GM12878 (cell line): ENCODE measurements at regions of chr20 and their contacts with region 1.

Region 1: GRCh38 chr20:6142348-6142993 is 19.6 kb upstream of the FERMT1 start:
- DNase-seq: peak; percentile 9
- ATAC-seq: peak; percentile 91
- H3K4me3 ChIP-seq: no peak overlapping the region
- H3K27ac ChIP-seq: no peak overlapping the region
- H3K4me1 ChIP-seq: no peaks in the 10 kb centered on the region
- H3K27me3 ChIP-seq: no peaks in the 10 kb centered on the region
- CTCF ChIP-seq: peak; percentile 71 to 84 (median 76); a peak in 5 of 6 replicates
- EP300 ChIP-seq: no peak
- POLR2A ChIP-seq: no peak
- RAD21 ChIP-seq: peak; percentile 68

Region 2: GRCh38 chr20:5844063-5844681 is 298.3 kb before region 1 on chr20:
- CTCF ChIA-PET with region 1: no interaction called
- POLR2A ChIA-PET with region 1: no interaction called
- RAD21 ChIA-PET with region 1: no interaction called
- SMC1A ChIA-PET with region 1: no interaction called
- in situ Hi-C with region 1: no loop called
- intact Hi-C with region 1: no loop called
- DNase-seq: peak; percentile 78
- ATAC-seq: peak; percentile 87
- H3K4me3 ChIP-seq: peak overlapping the region; percentile 24; the same call in 1 of the 2 replicates
- H3K27ac ChIP-seq: no peak overlapping the region
- H3K4me1 ChIP-seq: peaks cover 31% of the 10 kb centered on the region
- H3K27me3 ChIP-seq: no peaks in the 10 kb centered on the region
- CTCF ChIP-seq: no peak
- EP300 ChIP-seq: peak; percentile 56 to 62; a peak in 2 of 4 replicates
- POLR2A ChIP-seq: no peak
- RAD21 ChIP-seq: no peak

Region 3: GRCh38 chr20:6130045-6130444 is 12.4 kb before region 1 on chr20:
- CTCF ChIA-PET with region 1: interaction called, 10 read pairs
- POLR2A ChIA-PET with region 1: no interaction called
- RAD21 ChIA-PET with region 1: no interaction called
- SMC1A ChIA-PET with region 1: interaction called, 3 read pairs
- in situ Hi-C with region 1: no loop called
- intact Hi-C with region 1: no loop called
- DNase-seq: no peak
- ATAC-seq: no peak
- H3K4me3 ChIP-seq: no peak overlapping the region
- H3K27ac ChIP-seq: no peak overlapping the region
- H3K4me1 ChIP-seq: no peaks in the 10 kb centered on the region
- H3K27me3 ChIP-seq: peaks cover 0 to 2% of the 10 kb centered on the region in 2 experiments; a peak in 1 of 4 replicates
- CTCF ChIP-seq: no peak
- EP300 ChIP-seq: no peak
- POLR2A ChIP-seq: no peak
- RAD21 ChIP-seq: no peak

Region 4: GRCh38 chr20:7375905-7376304 is 1233.4 kb after region 1 on chr20:
- CTCF ChIA-PET with region 1: no interaction called
- POLR2A ChIA-PET with region 1: no interaction called
- RAD21 ChIA-PET with region 1: no interaction called
- SMC1A ChIA-PET with region 1: no interaction called
- in situ Hi-C with region 1: loop called (anchors 10 kb)
- intact Hi-C with region 1: loop called (anchors 5 kb)
- DNase-seq: no peak
- ATAC-seq: no peak
- H3K4me3 ChIP-seq: no peak overlapping the region
- H3K27ac ChIP-seq: no peak overlapping the region
- H3K4me1 ChIP-seq: no peaks in the 10 kb centered on the region
- H3K27me3 ChIP-seq: no peaks in the 10 kb centered on the region
- CTCF ChIP-seq: peak; percentile 22 to 39 (median 33); a peak in 3 of 6 replicates
- EP300 ChIP-seq: no peak
- POLR2A ChIP-seq: no peak
- RAD21 ChIP-seq: peak; percentile 39; the same call in 1 of the 2 replicates